ENCODE measurements at regions of chr18 and their contacts with region 1.

Region 1: GRCh38 chr18:10841203-10841602 is 308.2 kb downstream of the PIEZO2 start:
- DNase-seq: no peak
- H3K4me3 ChIP-seq: no peak overlapping the region
- H3K27ac ChIP-seq: no peak overlapping the region
- H3K4me1 ChIP-seq: no peaks in the 10 kb centered on the region
- H3K27me3 ChIP-seq: no peaks in the 10 kb centered on the region
- CTCF ChIP-seq: no peak
- EP300 ChIP-seq: no peak
- POLR2A ChIP-seq: no peak

Region 2: DNA sequence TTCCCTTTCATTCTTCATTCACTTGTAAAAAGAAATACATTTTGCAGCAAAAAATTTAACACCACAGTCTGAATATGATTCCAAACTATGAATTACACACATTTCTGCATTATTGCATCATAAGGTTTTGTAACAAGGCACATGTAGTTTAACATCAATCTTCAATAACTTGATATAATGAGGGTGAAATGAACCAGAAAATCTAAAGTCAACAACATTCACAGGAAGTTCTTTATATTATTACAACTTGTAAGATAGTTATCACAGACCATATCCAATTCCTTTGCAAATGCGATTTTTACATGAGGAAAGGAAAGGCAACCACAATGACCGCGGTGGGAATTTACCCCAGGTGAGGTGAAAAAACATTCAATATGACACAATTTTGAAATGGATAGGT is 102.1 kb before region 1 on chr18:
- intact Hi-C with region 1: no loop called
- DNase-seq: no peak
- H3K4me3 ChIP-seq: no peak overlapping the region
- H3K27ac ChIP-seq: no peak overlapping the region
- H3K4me1 ChIP-seq: no peaks in the 10 kb centered on the region
- H3K27me3 ChIP-seq: no peaks in the 10 kb centered on the region
- CTCF ChIP-seq: no peak
- EP300 ChIP-seq: no peak
- POLR2A ChIP-seq: no peak

Region 3: DNA sequence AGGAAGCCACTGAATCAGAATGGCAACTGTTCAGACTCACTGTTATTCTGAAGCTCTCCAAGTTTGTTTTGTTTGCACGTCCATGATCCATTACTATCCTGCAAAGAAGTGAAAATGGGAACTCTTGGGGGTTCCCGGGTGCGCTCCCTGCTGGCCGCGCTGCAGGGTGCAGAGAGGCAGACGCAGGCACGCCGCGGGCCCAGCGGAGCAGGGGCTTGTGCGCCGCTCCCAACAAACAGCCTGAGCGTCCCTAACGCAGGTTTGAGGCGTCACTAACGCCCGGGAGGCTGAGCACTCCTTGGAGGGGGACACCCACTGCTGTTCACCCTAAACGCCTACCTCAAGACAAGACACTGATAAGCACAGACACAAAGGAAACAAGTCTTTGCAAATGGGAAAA is 322.5 kb after region 1 on chr18:
- intact Hi-C with region 1: loop called in 1 of 4 experiments (anchors 10 kb)
- DNase-seq: no peak
- H3K4me3 ChIP-seq: no peak overlapping the region
- H3K27ac ChIP-seq: no peak overlapping the region
- H3K4me1 ChIP-seq: no peaks in the 10 kb centered on the region
- H3K27me3 ChIP-seq: no peaks in the 10 kb centered on the region
- CTCF ChIP-seq: peak in 1 of 3 donors; percentile 21
- EP300 ChIP-seq: no peak
- POLR2A ChIP-seq: no peak

Measured in ovary (tissue), 10 donors.